ENCODE measurements at regions of chr12 and their contacts with region 1.

Region 1: GRCh38 chr12:81627336-81628189 is 131.6 kb downstream of the PPFIA2 start:
- DNase-seq: peak in 10 of 42 donors; percentile 15 to 69 (median 45)

Region 2: DNA sequence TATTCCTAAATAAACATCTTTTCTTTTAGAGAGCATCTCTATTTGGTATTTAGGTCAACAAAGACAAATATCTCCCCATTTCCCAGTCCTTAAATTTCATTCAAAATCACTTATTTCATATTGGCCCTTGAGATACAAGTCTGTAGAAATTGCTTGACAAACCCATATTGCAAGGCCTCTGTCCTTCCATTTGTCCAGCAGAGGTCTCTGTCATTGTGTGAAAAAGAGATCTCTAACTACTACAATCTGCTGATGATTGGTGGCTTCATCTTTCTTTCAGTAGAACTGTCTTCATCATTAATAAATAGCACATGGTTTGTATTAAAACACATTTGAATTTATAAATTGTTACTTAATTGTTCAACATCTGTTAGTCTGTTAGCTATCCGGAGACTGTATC is 297.1 kb before region 1 on chr12:
- intact Hi-C with region 1: loop called (anchors 10 kb)
- DNase-seq: peak in 9 of 42 donors; percentile 14 to 70 (median 43)

Region 3: GRCh38 chr12:81450920-81451739 is 176.4 kb before region 1 on chr12:
- intact Hi-C with region 1: loop called (anchors 10 kb)
- DNase-seq: peak in 40 of 42 donors; percentile 6 to 82 (median 45)

Region 4: DNA sequence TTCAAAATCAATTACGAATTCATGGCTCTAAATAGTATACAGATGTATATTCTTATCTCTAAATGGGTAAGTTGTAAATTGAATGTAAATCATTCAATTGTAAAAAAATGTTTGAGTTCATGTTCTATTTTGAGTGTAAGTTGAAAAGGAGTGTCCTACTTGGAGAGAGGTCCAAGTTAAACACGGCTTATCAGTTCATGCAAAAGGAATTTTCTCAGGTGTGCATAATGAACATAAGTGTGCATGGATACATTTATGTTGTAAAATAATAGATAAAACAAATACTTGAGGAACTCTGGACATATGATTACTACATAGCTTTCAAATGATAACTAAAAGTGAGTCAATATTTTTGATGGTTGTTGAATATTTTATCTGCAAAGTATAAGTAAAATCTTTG is 52.1 kb after region 1 on chr12:
- intact Hi-C with region 1: no loop called
- DNase-seq: no peak

Measured in head of caudate nucleus (tissue), 42 donors.